Endothelial cell of umbilical vein (primary cell): ENCODE measurements at regions of chr6 and their contacts with region 1.

Region 1: DNA sequence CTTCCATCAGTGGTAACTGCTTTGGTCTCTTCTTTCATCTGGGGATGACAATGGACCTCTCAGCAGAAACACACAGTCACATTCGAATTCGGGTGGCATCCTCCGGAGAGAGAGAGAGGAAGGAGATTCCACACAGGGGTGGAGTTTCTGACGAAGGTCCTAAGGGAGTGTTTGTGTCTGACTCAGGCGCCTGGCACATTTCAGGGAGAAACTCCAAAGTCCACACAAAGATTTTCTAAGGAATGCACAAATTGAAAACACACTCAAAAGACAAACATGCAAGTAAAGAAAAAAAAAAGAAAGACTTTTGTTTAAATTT is 6.1 kb downstream of the EDN1 start:
- DNase-seq: peak; percentile 53
- H3K4me3 ChIP-seq: peak overlapping the region in 2 of 3 experiments; percentile 91 to 96
- H3K27ac ChIP-seq: peak overlapping the region; percentile 98
- H3K4me1 ChIP-seq: peaks cover 30% of the 10 kb centered on the region
- H3K27me3 ChIP-seq: no peaks in the 10 kb centered on the region
- CTCF ChIP-seq: no peak
- POLR2A ChIP-seq: no peak

Region 2: DNA sequence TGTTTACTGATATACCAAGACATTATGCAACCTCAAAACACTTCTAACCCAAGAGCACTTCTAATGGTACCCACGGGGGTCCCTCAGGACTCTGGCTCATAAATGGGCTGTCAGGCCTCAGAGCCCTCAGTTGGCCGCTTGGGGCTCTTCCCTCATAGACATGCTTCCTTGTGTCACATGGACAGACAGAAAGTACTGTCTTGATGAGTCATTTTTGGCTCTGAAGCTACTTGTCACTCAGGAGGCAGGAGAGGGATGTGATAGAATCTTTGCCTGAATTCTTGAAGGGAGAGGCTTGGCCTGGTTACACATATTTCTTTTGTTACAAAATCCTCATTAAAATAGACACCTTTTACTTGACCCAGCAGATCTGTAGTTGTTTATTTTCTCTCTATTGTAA is 21.1 kb before region 1 on chr6:
- CTCF ChIA-PET with region 1: no interaction called
- POLR2A ChIA-PET with region 1: no interaction called
- dilution Hi-C with region 1: no loop called
- intact Hi-C with region 1: no loop called
- DNase-seq: no peak
- H3K4me3 ChIP-seq: no peak overlapping the region
- H3K27ac ChIP-seq: no peak overlapping the region
- H3K4me1 ChIP-seq: no peaks in the 10 kb centered on the region
- H3K27me3 ChIP-seq: no peaks in the 10 kb centered on the region
- CTCF ChIP-seq: no peak
- POLR2A ChIP-seq: no peak

Region 3: DNA sequence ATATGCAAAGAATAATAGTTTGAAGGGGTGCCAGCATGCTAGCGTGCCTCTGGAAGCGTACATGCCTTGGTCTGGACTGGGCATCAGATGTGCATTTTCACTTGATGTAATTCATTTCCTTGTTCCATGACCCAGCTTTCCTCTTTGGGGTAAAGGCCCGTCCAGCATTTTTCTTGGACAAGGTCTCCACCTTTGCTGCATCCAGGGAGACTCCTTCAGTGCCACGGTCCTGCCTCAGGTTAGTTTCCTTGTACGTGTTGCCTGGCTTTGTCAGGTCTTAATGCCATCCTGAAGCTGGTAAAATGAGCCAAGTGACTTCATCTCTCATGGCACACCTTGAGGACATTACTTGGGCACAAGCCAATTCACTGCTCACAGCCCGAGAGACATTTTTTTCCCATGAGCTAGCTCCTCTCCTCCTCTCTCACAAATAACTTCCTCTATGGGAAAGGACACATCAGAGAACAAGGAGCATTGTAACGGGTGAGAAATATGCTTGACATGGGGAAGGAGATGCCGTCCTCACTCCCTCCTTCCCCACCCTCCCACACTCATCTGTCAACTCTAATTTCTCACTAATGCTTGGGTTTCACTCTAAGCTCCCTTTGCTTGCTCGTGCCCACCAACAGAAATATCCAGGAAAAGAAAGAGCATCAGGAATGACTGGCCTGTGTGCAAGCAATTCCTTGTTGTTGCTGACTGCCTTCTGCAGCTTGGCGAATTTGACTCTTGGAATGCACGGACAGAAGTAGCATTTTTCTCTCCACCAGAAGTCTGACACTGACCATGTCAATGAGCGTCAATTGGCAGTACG is 18.0 kb after region 1 on chr6:
- CTCF ChIA-PET with region 1: interaction called, 21 read pairs
- POLR2A ChIA-PET with region 1: interaction called, 7 read pairs
- dilution Hi-C with region 1: no loop called
- intact Hi-C with region 1: no loop called
- DNase-seq: peak; percentile 89
- H3K4me3 ChIP-seq: no peak overlapping the region
- H3K27ac ChIP-seq: peak overlapping the region; percentile 77
- H3K4me1 ChIP-seq: peaks cover 23% of the 10 kb centered on the region
- H3K27me3 ChIP-seq: no peaks in the 10 kb centered on the region
- CTCF ChIP-seq: no peak
- POLR2A ChIP-seq: no peak

Region 4: GRCh38 chr6:12395898-12396297 is 99.7 kb after region 1 on chr6:
- CTCF ChIA-PET with region 1: interaction called, 3 read pairs
- POLR2A ChIA-PET with region 1: no interaction called
- dilution Hi-C with region 1: no loop called
- intact Hi-C with region 1: loop called (anchors 1 kb)
- DNase-seq: peak; percentile 47
- H3K4me3 ChIP-seq: no peak overlapping the region
- H3K27ac ChIP-seq: no peak overlapping the region
- H3K4me1 ChIP-seq: peaks cover 26% of the 10 kb centered on the region
- H3K27me3 ChIP-seq: no peaks in the 10 kb centered on the region
- CTCF ChIP-seq: no peak
- POLR2A ChIP-seq: no peak

Region 5: GRCh38 chr6:12420626-12421025 is 124.4 kb after region 1 on chr6:
- CTCF ChIA-PET with region 1: no interaction called
- POLR2A ChIA-PET with region 1: no interaction called
- dilution Hi-C with region 1: no loop called
- intact Hi-C with region 1: no loop called
- DNase-seq: no peak
- H3K4me3 ChIP-seq: no peak overlapping the region
- H3K27ac ChIP-seq: no peak overlapping the region
- H3K4me1 ChIP-seq: peaks cover under 1% of the 10 kb centered on the region
- H3K27me3 ChIP-seq: no peaks in the 10 kb centered on the region
- CTCF ChIP-seq: no peak
- POLR2A ChIP-seq: no peak

Region 6: DNA sequence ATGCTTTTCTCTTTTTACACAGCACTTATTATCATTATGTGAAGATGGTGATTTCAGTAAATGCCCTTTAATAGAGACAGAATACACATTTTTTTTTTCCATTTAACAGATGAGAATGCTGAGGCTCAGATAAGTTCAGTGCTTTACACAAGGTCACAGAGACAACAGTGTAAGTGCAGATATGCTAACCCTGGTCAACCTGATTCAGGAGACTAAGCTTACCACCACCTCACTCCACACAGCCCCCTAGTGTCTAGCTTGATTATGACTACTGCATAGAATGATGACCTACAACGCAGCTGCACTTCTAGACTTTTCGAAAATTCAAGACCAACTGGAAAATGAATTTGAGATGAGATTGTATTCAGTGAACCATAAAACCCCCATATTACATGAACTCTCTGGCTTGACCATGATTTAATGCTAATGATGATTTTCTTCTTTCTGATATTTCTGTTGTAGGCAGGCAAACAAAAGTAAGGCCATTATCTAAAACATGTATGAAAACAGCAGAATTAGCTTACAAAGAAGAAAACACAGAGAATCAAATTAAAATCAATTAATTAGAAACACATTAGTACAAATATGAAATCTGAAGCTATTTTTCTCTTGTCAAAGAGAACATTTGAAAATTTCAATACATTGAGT is 208.2 kb after region 1 on chr6:
- CTCF ChIA-PET with region 1: interaction called, 18 read pairs
- POLR2A ChIA-PET with region 1: no interaction called
- dilution Hi-C with region 1: loop called (anchors 25 kb)
- intact Hi-C with region 1: loop called (anchors 1 kb)
- DNase-seq: no peak
- H3K4me3 ChIP-seq: no peak overlapping the region
- H3K27ac ChIP-seq: no peak overlapping the region
- H3K4me1 ChIP-seq: no peaks in the 10 kb centered on the region
- H3K27me3 ChIP-seq: no peaks in the 10 kb centered on the region
- CTCF ChIP-seq: peak; percentile 25 to 46
- POLR2A ChIP-seq: no peak